ENCODE measurements at regions of chr11 and their contacts with region 1.

Region 1: DNA sequence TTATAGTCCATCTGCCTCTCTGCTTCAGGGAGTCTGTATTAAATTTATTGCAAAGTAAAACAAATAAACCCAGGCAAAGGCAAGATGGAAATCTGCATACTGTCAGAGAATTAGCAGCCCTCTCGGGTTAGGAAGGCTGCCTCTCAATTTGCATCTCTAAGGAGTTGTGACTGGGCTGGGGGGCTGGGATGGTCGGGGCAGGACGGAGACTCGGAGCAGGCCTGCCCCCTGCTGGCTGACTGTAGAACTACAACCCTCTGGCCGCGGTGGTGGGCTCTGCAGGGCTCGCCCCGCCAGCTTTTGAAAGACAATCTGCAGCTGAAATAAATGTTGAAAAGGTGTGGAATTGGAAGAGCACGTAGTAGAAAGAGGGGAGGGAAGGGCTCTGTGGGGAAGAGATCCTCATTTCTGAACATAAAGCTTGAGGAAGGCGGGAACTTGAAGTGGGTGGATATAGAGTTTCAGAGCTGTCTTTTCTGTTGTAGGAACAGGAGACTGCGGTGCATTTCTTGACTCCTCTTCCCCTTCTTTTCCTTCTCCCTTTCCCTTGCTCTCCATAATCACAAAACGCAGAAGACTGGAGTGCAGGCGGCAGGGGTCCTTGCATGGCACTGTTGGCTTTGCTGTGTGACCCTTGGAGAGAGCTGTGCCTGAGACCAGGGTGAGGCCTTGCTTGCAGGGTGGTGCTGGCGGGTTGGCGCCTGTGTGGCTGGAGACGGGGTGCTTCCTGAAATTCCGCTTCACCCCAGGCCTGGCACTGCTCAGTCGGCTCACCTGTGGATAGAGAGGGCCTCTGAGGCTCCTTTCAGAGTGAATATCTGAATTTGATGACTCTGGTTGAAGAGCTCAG is 22.6 kb upstream of the PKNOX2 start:
- DNase-seq: peak; percentile 40 to 53 (median 44)
- H3K4me3 ChIP-seq: no peak overlapping the region
- H3K4me3 Mint-ChIP-seq: peak overlapping the region in 1 of 8 donors; percentile 38
- H3K27ac ChIP-seq: no peak overlapping the region
- H3K27ac Mint-ChIP-seq: peak overlapping the region in 1 of 7 donors; percentile 12
- H3K4me1 ChIP-seq: peaks cover 5% of the 10 kb centered on the region
- H3K4me1 Mint-ChIP-seq: peaks cover 2 to 7% (median 4%) of the 10 kb centered on the region in 4 donors
- H3K27me3 ChIP-seq: peaks cover 12% of the 10 kb centered on the region
- H3K27me3 Mint-ChIP-seq: peaks cover 24 to 44% of the 10 kb centered on the region in 2 donors

Region 2: DNA sequence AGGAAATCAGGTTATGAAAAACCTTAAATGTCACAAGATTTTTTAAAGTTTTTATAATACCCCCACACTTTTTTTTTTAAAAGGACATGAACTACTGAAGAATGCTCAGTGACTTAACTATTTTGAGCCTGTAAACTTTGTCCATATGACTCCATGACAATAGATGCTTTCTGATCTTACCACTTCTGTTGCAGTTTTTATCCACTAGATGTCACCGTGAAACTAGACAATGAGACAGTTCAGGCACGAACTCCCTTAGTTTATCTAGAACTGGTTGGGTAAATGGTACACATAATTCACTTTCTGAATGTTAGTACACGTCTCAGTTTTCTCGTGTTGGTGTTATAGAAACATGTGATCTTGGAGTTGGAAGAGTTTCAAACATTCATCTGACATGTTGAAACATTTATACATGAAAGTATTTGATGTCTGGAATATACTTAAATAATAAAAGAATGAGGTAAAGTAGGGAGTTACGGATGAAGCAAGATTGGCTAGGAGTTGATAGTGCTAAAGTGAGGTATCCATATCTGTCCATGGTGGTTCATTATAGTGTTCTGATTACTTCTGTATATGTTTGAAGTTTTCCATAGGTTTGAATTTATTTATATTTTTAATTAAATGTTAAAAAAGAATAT is 179.8 kb before region 1 on chr11:
- CTCF ChIA-PET with region 1: interaction called, 90 read pairs
- POLR2A ChIA-PET with region 1: no interaction called
- intact Hi-C with region 1: loop called (anchors 1 kb)
- DNase-seq: peak; percentile 41 to 71 (median 68)
- H3K4me3 ChIP-seq: no peak overlapping the region
- H3K4me3 Mint-ChIP-seq: no peak overlapping the region
- H3K27ac ChIP-seq: no peak overlapping the region
- H3K27ac Mint-ChIP-seq: no peak overlapping the region
- H3K4me1 ChIP-seq: no peaks in the 10 kb centered on the region
- H3K4me1 Mint-ChIP-seq: no peaks in the 10 kb centered on the region
- H3K27me3 ChIP-seq: no peaks in the 10 kb centered on the region
- H3K27me3 Mint-ChIP-seq: no peaks in the 10 kb centered on the region

Region 3: DNA sequence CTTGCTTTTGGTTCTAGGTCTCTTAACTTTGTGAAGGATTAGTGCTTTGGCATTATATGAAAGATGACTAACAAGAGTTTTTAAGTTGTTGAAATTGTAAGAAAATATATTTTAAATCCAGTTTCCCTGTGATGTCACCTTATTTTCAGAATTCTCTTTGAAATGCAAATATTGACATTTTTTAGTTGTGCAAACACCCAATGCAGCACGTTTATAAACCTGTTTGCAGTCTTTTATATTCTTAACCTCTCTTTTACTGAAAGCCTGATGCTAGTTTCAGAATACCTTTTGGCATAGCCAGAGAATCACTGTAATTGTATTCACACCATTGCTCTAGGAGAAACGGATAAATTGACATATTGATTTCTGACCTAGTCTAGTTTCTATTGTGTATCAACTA is 121.6 kb before region 1 on chr11:
- CTCF ChIA-PET with region 1: no interaction called
- POLR2A ChIA-PET with region 1: no interaction called
- intact Hi-C with region 1: no loop called
- DNase-seq: no peak
- H3K4me3 ChIP-seq: no peak overlapping the region
- H3K4me3 Mint-ChIP-seq: no peak overlapping the region
- H3K27ac ChIP-seq: no peak overlapping the region
- H3K27ac Mint-ChIP-seq: no peak overlapping the region
- H3K4me1 ChIP-seq: no peaks in the 10 kb centered on the region
- H3K4me1 Mint-ChIP-seq: no peaks in the 10 kb centered on the region
- H3K27me3 ChIP-seq: no peaks in the 10 kb centered on the region
- H3K27me3 Mint-ChIP-seq: no peaks in the 10 kb centered on the region

Region 4: DNA sequence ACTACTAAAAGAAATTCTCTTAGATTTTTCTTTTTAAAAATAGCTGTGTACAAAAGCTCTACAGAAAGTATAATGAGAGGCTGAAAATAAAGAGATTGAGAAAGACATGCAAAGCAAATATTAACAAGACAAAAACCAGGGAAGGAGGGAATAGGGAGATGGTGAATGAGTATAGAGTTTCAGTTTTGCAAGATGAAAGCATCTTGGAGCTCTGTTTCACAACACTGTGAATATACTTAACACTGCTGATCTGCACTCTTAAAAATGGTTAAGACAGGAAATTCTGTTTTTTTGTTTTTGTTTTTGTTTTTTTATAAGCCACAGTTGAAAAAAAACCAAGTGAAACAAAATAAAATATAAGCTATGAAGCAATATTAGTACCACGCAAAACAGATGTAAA is 36.0 kb before region 1 on chr11:
- CTCF ChIA-PET with region 1: interaction called, 10 read pairs
- POLR2A ChIA-PET with region 1: no interaction called
- intact Hi-C with region 1: no loop called
- DNase-seq: no peak
- H3K4me3 ChIP-seq: no peak overlapping the region
- H3K4me3 Mint-ChIP-seq: no peak overlapping the region
- H3K27ac ChIP-seq: no peak overlapping the region
- H3K27ac Mint-ChIP-seq: peak overlapping the region in 1 of 7 donors; percentile 67
- H3K4me1 ChIP-seq: peaks cover 9% of the 10 kb centered on the region
- H3K4me1 Mint-ChIP-seq: peaks cover 4 to 17% (median 8%) of the 10 kb centered on the region in 4 donors
- H3K27me3 ChIP-seq: no peaks in the 10 kb centered on the region
- H3K27me3 Mint-ChIP-seq: no peaks in the 10 kb centered on the region

Region 5: GRCh38 chr11:125123947-125124617 is 17.8 kb before region 1 on chr11:
- CTCF ChIA-PET with region 1: interaction called, 62 read pairs
- POLR2A ChIA-PET with region 1: no interaction called
- intact Hi-C with region 1: no loop called
- DNase-seq: peak; percentile 13 to 41 (median 24)
- H3K4me3 ChIP-seq: no peak overlapping the region
- H3K4me3 Mint-ChIP-seq: no peak overlapping the region
- H3K27ac ChIP-seq: no peak overlapping the region
- H3K27ac Mint-ChIP-seq: no peak overlapping the region
- H3K4me1 ChIP-seq: no peaks in the 10 kb centered on the region
- H3K4me1 Mint-ChIP-seq: peaks cover 0 to 7% (median 0%) of the 10 kb centered on the region in 4 donors
- H3K27me3 ChIP-seq: peaks cover 6% of the 10 kb centered on the region
- H3K27me3 Mint-ChIP-seq: peaks cover 17 to 20% of the 10 kb centered on the region in 2 donors

Region 6: GRCh38 chr11:125214571-125215565 is 73.0 kb after region 1 on chr11:
- CTCF ChIA-PET with region 1: no interaction called
- POLR2A ChIA-PET with region 1: no interaction called
- intact Hi-C with region 1: no loop called
- DNase-seq: no peak
- H3K4me3 ChIP-seq: no peak overlapping the region
- H3K4me3 Mint-ChIP-seq: no peak overlapping the region
- H3K27ac ChIP-seq: no peak overlapping the region
- H3K27ac Mint-ChIP-seq: no peak overlapping the region
- H3K4me1 ChIP-seq: no peaks in the 10 kb centered on the region
- H3K4me1 Mint-ChIP-seq: no peaks in the 10 kb centered on the region
- H3K27me3 ChIP-seq: no peaks in the 10 kb centered on the region
- H3K27me3 Mint-ChIP-seq: peaks cover 24 to 26% of the 10 kb centered on the region in 2 donors

Region 7: DNA sequence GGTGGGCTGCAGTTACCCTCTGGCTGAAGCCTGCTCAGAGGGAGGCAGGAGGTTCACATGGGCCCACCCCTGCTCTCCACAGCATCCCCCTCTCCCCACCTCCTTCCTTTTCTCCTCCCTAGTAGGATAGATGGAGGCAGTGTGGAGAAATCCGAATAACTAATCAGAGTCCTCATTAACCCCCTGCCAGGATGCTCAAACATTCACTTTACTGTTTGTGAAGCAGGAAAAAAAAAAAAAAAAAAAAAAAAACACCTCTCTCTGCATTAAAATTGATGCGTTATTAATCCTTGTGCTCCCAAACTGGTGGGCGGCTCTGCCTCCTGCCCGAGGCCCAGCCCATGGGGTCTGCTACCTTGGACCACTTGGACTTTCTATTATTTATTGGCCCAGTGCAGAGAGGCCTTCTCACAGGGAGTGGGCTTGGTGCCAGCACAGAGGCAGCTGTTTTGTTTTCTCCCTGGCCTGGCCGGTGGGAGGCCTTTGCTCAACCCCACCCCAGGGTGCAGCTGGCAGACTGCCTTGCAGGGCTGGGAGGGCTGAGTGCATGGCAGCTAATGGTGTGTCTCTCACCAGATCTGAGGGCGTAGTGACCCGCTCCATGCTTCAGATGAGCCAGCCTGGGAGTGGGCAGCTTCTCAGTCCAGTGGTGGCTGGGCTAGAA is 173.3 kb after region 1 on chr11:
- CTCF ChIA-PET with region 1: no interaction called
- POLR2A ChIA-PET with region 1: no interaction called
- intact Hi-C with region 1: no loop called
- DNase-seq: no peak
- H3K4me3 ChIP-seq: no peak overlapping the region
- H3K4me3 Mint-ChIP-seq: no peak overlapping the region
- H3K27ac ChIP-seq: no peak overlapping the region
- H3K27ac Mint-ChIP-seq: no peak overlapping the region
- H3K4me1 ChIP-seq: no peaks in the 10 kb centered on the region
- H3K4me1 Mint-ChIP-seq: no peaks in the 10 kb centered on the region
- H3K27me3 ChIP-seq: no peaks in the 10 kb centered on the region
- H3K27me3 Mint-ChIP-seq: peaks cover 17 to 19% of the 10 kb centered on the region in 2 donors